Heart left ventricle (tissue), 16 donors: ENCODE measurements at regions of chr10 and their contacts with region 1.

Region 1: GRCh38 chr10:122953827-122954730 is at the start of gene C10orf88:
- DNase-seq: peak; percentile 96 to 99 (median 98)
- ATAC-seq: peak; percentile 98 to 100 (median 99)
- H3K4me3 ChIP-seq: peak within 1 kb of the TSS; percentile 75 to 99 (median 88)
- H3K27ac ChIP-seq: peak within 1 kb of the TSS; percentile 55 to 85 (median 73)
- H3K4me1 ChIP-seq: peaks cover 0 to 24% (median 17%) of the 10 kb centered on the region in 12 donors
- H3K27me3 ChIP-seq: no peaks in the 10 kb centered on the region
- CTCF ChIP-seq: peak in 1 of 12 donors; percentile 6
- POLR2A ChIP-seq: peak in 1 of 2 donors; percentile 54
- total RNA-seq, gene C10orf88: 3.4 to 8.3 (median 5.7) TPM

Region 2: GRCh38 chr10:122864895-122865294 is 89.2 kb before region 1 on chr10:
- intact Hi-C with region 1: no loop called
- DNase-seq: no peak
- ATAC-seq: no peak
- H3K4me3 ChIP-seq: no peak overlapping the region
- H3K27ac ChIP-seq: no peak overlapping the region
- H3K4me1 ChIP-seq: peaks cover 0 to 4% (median 0%) of the 10 kb centered on the region in 12 donors
- H3K27me3 ChIP-seq: no peaks in the 10 kb centered on the region
- CTCF ChIP-seq: no peak
- POLR2A ChIP-seq: no peak

Region 3: GRCh38 chr10:122980209-122981065 is 26.4 kb after region 1 on chr10 and contains the start of gene PSTK:
- intact Hi-C with region 1: loop called in 4 of 10 experiments (anchors 1 to 2 kb)
- DNase-seq: peak; percentile 91 to 96 (median 94)
- ATAC-seq: peak; percentile 97 to 99 (median 99)
- H3K4me3 ChIP-seq: peak within 1 kb of the TSS; percentile 41 to 92 (median 74)
- H3K27ac ChIP-seq: peak within 1 kb of the TSS; percentile 86 to 96 (median 92)
- H3K4me1 ChIP-seq: peaks cover 0 to 13% (median 6%) of the 10 kb centered on the region in 12 donors
- H3K27me3 ChIP-seq: no peaks in the 10 kb centered on the region
- CTCF ChIP-seq: peak; percentile 86 to 98 (median 95)
- POLR2A ChIP-seq: peak in 1 of 2 donors; percentile 53
- total RNA-seq, gene PSTK: 0.97 to 3.9 (median 2.0) TPM

Region 4: DNA sequence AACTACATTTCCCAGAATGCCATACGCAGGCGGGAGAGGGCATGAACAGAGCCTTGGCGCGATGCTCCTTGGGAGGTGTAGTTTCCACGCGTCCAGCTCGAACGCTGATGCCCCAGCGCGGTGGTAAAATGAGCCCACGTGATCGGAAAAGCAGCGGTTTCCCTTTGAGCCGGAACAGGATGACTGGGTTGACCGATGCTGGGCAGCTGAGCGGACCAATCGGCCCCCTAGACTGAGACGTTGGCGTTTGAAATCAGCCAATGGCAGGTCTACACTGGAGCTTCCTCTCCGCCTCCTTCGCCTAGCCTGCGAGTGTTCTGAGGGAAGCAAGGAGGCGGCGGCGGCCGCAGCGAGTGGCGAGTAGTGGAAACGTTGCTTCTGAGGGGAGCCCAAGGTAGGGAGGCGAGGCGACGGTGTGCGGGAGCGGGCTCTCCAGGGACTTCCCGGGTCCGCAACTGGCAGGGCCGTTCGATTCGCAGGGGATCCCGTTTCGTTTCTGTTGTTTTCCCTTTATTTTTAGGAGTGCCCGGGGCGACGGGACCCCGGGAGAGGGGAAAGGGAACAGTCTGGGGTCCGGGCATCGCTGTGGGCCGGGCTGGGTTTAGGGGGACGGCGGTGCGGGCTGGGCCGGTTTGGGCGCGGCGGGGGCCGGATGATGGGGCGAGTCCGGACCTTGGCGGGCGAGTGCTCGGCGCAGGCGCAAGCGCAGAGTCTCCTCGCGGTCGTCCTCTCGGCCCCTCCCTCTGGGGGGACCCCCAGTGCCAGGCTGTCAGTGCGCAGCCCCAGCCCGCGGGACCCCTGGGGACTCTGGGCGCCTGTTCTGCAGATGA is 200.2 kb after region 1 on chr10 and contains the start of gene BUB3:
- intact Hi-C with region 1: loop called in 1 of 10 experiments (anchors 5 kb)
- DNase-seq: peak; percentile 97 to 99 (median 99)
- ATAC-seq: peak; percentile 99 to 100 (median 99)
- H3K4me3 ChIP-seq: peak within 1 kb of the TSS; percentile 64 to 99 (median 85)
- H3K27ac ChIP-seq: peak within 1 kb of the TSS; percentile 47 to 96 (median 90)
- H3K4me1 ChIP-seq: peaks cover 4 to 62% (median 35%) of the 10 kb centered on the region in 12 donors
- H3K27me3 ChIP-seq: peaks cover 27 to 44% (median 40%) of the 10 kb centered on the region in 9 donors
- CTCF ChIP-seq: peak in 7 of 12 donors; percentile 9 to 51 (median 26)
- POLR2A ChIP-seq: peak in 1 of 2 donors; percentile 82
- total RNA-seq, gene BUB3: 23.8 to 47.5 (median 38.7) TPM